ENCODE measurements at regions of chr16 and their contacts with region 1.

Region 1: GRCh38 chr16:27367461-27368357 is 34.3 kb upstream of the IL21R start:
- DNase-seq: peak; percentile 70 to 98 (median 84)
- ATAC-seq: peak; percentile 81
- H3K4me3 ChIP-seq: peak overlapping the region; percentile 1 to 11
- H3K4me3 Mint-ChIP-seq: peak overlapping the region; percentile 26
- H3K27ac ChIP-seq: peak overlapping the region; percentile 93 to 97
- H3K27ac Mint-ChIP-seq: peak overlapping the region; percentile 99
- H3K4me1 ChIP-seq: peaks cover 58% of the 10 kb centered on the region
- H3K4me1 Mint-ChIP-seq: peaks cover 69% of the 10 kb centered on the region
- H3K27me3 ChIP-seq: no peaks in the 10 kb centered on the region
- H3K27me3 Mint-ChIP-seq: no peaks in the 10 kb centered on the region
- CTCF ChIP-seq: peak; percentile 73

Region 2: GRCh38 chr16:27005386-27005785 is 362.3 kb before region 1 on chr16:
- CTCF ChIA-PET with region 1: no interaction called
- POLR2A ChIA-PET with region 1: no interaction called
- intact Hi-C with region 1: no loop called
- DNase-seq: no peak
- ATAC-seq: no peak
- H3K4me3 ChIP-seq: no peak overlapping the region
- H3K4me3 Mint-ChIP-seq: no peak overlapping the region
- H3K27ac ChIP-seq: no peak overlapping the region
- H3K27ac Mint-ChIP-seq: no peak overlapping the region
- H3K4me1 ChIP-seq: no peaks in the 10 kb centered on the region
- H3K4me1 Mint-ChIP-seq: no peaks in the 10 kb centered on the region
- H3K27me3 ChIP-seq: peaks cover 0 to 4% of the 10 kb centered on the region in 2 experiments
- H3K27me3 Mint-ChIP-seq: peaks cover 39% of the 10 kb centered on the region
- CTCF ChIP-seq: no peak

Region 3: GRCh38 chr16:27179500-27180072 is 188.1 kb before region 1 on chr16:
- CTCF ChIA-PET with region 1: interaction called, 51 read pairs
- POLR2A ChIA-PET with region 1: interaction called, 10 read pairs
- intact Hi-C with region 1: loop called (anchors 1 to 2 kb)
- DNase-seq: peak; percentile 78 to 94 (median 88)
- ATAC-seq: peak; percentile 100
- H3K4me3 ChIP-seq: no peak overlapping the region
- H3K4me3 Mint-ChIP-seq: peak overlapping the region; percentile 9
- H3K27ac ChIP-seq: no peak overlapping the region
- H3K27ac Mint-ChIP-seq: peak overlapping the region; percentile 28
- H3K4me1 ChIP-seq: peaks cover 22% of the 10 kb centered on the region
- H3K4me1 Mint-ChIP-seq: peaks cover 24% of the 10 kb centered on the region
- H3K27me3 ChIP-seq: no peaks in the 10 kb centered on the region
- H3K27me3 Mint-ChIP-seq: no peaks in the 10 kb centered on the region
- CTCF ChIP-seq: peak; percentile 92

Region 4: DNA sequence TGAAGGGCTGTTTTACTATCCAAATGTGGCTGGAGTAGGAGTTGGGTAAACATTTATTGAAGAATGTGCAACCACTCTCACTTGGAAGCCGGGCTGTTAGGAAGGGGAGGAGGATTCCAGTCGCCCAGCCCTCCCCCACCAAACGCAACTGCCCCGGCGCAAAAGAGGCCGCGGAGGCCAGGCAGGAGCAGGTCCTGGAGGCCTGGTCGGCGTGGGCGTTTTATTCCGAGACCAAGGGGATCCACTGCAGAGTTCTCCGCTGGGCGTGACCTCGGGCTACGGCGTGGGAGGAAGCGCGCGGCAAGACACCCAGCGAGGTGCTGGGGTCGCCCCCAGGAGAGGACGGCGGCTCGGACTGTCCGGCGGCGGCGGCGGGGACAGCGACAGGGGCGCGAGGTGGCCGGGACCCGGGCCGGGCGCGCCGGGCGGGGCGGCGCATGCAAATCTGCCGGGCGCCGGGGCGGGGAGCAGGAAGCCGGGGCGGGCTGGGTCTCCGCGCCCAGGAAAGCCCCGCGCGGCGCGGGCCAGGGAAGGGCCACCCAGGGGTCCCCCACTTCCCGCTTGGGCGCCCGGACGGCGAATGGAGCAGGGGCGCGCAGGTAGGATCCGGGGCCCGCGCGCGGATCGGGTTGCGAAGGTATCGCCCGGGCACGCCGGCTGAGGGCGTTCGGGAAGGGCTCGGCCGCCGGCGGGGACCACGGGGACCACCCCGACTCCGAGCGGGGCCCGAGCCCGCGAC is 54.1 kb before region 1 on chr16 and contains the start of gene IL4R:
- CTCF ChIA-PET with region 1: interaction called, 20 read pairs
- POLR2A ChIA-PET with region 1: interaction called, 4 read pairs
- intact Hi-C with region 1: loop called (anchors 2 kb)
- DNase-seq: peak; percentile 19 to 84 (median 64)
- ATAC-seq: peak; percentile 51
- H3K4me3 ChIP-seq: peak within 1 kb of the TSS; percentile 88 to 90
- H3K4me3 Mint-ChIP-seq: peak within 1 kb of the TSS; percentile 94
- H3K27ac ChIP-seq: peak within 1 kb of the TSS; percentile 83 to 87
- H3K27ac Mint-ChIP-seq: peak within 1 kb of the TSS; percentile 98
- H3K4me1 ChIP-seq: peaks cover 43% of the 10 kb centered on the region
- H3K4me1 Mint-ChIP-seq: peaks cover 47% of the 10 kb centered on the region
- H3K27me3 ChIP-seq: no peaks in the 10 kb centered on the region
- H3K27me3 Mint-ChIP-seq: no peaks in the 10 kb centered on the region
- CTCF ChIP-seq: no peak
- total RNA-seq, gene IL4R: 224 to 240 TPM

Region 5: GRCh38 chr16:27408012-27408601 is 40.4 kb after region 1 on chr16:
- CTCF ChIA-PET with region 1: interaction called, 22 read pairs
- POLR2A ChIA-PET with region 1: interaction called, 19 read pairs
- intact Hi-C with region 1: no loop called
- DNase-seq: peak in 4 of 9 experiments; percentile 51 to 73 (median 56)
- ATAC-seq: peak; percentile 52
- H3K4me3 ChIP-seq: peak overlapping the region; percentile 2 to 11
- H3K4me3 Mint-ChIP-seq: peak overlapping the region; percentile 97
- H3K27ac ChIP-seq: peak overlapping the region; percentile 17 to 66
- H3K27ac Mint-ChIP-seq: peak overlapping the region; percentile 91
- H3K4me1 ChIP-seq: peaks cover 63% of the 10 kb centered on the region
- H3K4me1 Mint-ChIP-seq: peaks cover 85% of the 10 kb centered on the region
- H3K27me3 ChIP-seq: no peaks in the 10 kb centered on the region
- H3K27me3 Mint-ChIP-seq: no peaks in the 10 kb centered on the region
- CTCF ChIP-seq: no peak

Region 6: GRCh38 chr16:27455700-27456099 is 88.0 kb after region 1 on chr16:
- CTCF ChIA-PET with region 1: interaction called, 33 read pairs
- POLR2A ChIA-PET with region 1: interaction called, 8 read pairs
- intact Hi-C with region 1: loop called (anchors 1 kb)
- DNase-seq: peak in 1 of 9 experiments; percentile 64
- ATAC-seq: peak; percentile 30
- H3K4me3 ChIP-seq: no peak overlapping the region
- H3K4me3 Mint-ChIP-seq: peak overlapping the region; percentile 27
- H3K27ac ChIP-seq: peak overlapping the region in 1 of 2 experiments; percentile 39
- H3K27ac Mint-ChIP-seq: peak overlapping the region; percentile 83
- H3K4me1 ChIP-seq: peaks cover 53% of the 10 kb centered on the region
- H3K4me1 Mint-ChIP-seq: peaks cover 74% of the 10 kb centered on the region
- H3K27me3 ChIP-seq: no peaks in the 10 kb centered on the region
- H3K27me3 Mint-ChIP-seq: no peaks in the 10 kb centered on the region
- CTCF ChIP-seq: no peak

Measured in CD8-positive, alpha-beta T cell (primary cell).